Dorsolateral prefrontal cortex (tissue), 120 donors: ENCODE measurements at regions of chr2 and their contacts with region 1.

Region 1: DNA sequence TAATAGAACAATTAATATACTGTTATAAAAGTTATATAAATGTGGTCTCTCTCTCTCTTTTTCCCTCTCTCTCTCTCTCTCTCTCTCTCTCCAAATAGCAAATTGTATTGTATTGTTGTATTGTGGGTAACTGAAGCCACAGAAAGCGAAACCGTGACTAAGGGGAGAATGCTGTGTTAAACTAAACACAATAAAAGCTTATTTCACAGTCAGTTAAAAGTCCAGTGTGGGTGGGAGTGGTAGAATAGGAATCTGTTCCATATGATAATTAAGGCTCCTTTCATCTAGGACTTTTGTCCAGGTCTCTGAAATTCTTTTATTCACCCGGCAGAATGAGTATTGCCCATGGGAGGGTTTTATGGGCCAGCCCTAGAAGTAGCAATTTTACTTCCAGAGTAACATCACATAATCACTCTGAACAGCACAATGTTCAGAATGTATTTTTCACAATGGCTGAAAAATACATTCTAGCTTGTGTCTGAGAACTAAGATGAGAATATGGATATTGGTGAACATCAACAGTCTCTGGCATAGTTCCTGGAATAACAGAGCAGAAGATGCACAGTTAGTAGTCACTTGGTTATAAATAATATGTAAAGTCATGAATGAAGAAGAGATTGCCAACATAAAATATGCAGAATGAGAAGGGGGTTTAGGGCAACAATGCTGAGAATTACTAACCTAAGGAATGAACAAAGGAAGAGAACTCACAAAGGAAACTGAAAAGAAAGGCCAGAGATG is 399.1 kb downstream of the PLCL1 start:
- DNase-seq: no peak
- H3K4me3 ChIP-seq: peak overlapping the region in 43 of 59 donors; percentile 0 to 56 (median 27)
- H3K27ac ChIP-seq: peak overlapping the region in 46 of 59 donors; percentile 2 to 79 (median 53)
- H3K27me3 ChIP-seq: no peaks in the 10 kb centered on the region
- CTCF ChIP-seq: no peak

Region 2: GRCh38 chr2:197997083-197997541 is 206.4 kb before region 1 on chr2:
- intact Hi-C with region 1: no loop called
- DNase-seq: no peak
- H3K4me3 ChIP-seq: no peak overlapping the region
- H3K27ac ChIP-seq: no peak overlapping the region
- H3K27me3 ChIP-seq: no peaks in the 10 kb centered on the region
- CTCF ChIP-seq: no peak

Region 3: DNA sequence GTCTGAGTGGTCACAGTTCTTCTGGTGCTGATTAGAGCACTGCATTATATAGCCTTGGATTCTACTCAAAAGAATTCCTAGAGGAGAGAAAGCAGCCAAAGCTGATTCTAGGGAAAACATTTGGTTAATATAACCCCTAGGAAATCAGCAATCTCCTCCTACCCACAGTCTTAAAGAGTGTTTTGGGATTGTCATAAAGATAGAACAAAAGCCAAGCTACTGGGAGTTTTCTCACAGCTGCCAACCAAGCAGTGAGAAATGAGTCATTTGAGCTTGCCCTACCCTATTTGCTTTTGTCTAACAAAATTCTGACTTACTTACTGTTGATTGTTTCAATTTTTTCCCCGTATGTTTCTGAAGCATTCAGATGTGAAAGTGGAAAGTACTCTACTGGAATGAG is 70.2 kb after region 1 on chr2:
- intact Hi-C with region 1: loop called in 1 of 2 experiments (anchors 10 kb)
- DNase-seq: peak in 1 of 10 donors; percentile 24
- H3K4me3 ChIP-seq: peak overlapping the region in 2 of 59 donors; percentile 27
- H3K27ac ChIP-seq: peak overlapping the region in 39 of 59 donors; percentile 3 to 76 (median 58)
- H3K27me3 ChIP-seq: no peaks in the 10 kb centered on the region
- CTCF ChIP-seq: peak in 1 of 56 donors; percentile 16